RWPE1 (cell line): ENCODE measurements at regions of chr11 and their contacts with region 1.

Region 1: DNA sequence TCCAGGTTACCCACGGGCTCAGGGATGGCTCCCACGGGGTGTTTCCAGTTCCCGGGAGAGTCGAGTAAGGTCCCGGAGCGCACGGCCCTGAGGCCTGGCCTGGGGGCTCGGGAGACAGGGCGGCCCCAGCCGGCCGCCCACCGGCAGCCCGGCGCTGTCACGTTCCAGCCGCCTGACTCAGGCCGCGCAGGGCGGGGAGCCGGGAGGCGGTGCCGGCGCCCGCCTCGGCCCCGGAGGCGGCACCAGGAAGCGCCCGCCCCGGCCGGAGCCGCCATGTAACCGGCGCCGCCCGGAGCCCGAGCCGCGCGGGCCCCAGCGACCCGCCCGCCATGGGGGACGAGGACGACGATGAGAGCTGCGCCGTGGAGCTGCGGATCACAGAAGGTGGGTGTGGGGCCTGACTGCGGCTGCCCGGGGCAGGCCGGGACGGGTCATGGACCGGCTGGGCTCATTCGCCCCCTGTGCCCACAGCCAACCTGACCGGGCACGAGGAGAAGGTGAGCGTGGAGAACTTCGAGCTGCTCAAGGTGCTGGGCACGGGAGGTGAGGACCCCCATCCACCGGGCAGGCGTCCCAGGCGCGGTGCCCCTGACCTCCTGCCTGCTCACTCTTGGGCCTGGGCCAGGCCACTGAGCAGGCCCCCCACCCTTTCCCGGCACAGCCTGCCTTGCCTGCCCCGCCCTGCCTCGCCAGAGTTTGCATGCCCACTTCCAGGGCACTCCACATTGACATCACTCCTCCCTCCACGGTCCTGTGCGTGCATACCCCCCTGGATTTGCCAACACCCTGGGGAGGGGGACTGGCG is at the start of gene RPS6KA4:
- DNase-seq: peak; percentile 82
- H3K27ac ChIP-seq: peak within 1 kb of the TSS; percentile 98
- CTCF ChIP-seq: no peak

Region 2: GRCh38 chr11:64294774-64295173 is 64.3 kb before region 1 on chr11:
- CTCF ChIA-PET with region 1: no interaction called
- POLR2A ChIA-PET with region 1: no interaction called
- DNase-seq: no peak
- H3K27ac ChIP-seq: no peak overlapping the region
- CTCF ChIP-seq: no peak

Region 3: DNA sequence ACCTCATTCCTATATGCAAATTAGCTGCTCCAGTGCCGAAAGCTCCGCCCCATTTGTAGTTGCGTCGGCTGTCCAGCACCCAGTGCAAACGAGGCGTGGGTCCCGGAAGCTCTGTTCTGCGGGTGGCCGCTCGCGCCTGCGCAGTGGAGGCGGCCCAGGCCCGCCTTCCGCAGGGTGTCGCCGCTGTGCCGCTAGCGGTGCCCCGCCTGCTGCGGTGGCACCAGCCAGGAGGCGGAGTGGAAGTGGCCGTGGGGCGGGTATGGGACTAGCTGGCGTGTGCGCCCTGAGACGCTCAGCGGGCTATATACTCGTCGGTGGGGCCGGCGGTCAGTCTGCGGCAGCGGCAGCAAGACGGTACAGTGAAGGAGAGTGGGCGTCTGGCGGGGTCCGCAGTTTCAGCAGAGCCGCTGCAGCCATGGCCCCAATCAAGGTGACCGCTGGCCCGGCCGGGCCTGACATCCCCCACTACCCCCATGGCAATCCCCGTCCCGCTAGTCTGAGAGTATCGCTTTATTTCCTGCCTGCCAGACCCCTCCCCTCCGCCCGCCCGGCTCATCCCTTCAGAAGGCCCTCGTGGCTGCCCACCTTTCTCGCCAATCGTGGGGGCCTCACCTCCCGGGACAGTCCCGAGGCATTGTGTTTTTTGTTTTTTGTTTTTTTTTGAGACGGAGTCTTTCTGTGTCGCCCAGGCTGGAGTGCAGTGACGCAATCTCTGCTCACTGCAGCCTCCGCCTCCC is 41.0 kb before region 1 on chr11 and contains the start of gene PRDX5:
- CTCF ChIA-PET with region 1: interaction called, 13 read pairs
- POLR2A ChIA-PET with region 1: interaction called, 19 read pairs
- DNase-seq: peak; percentile 90
- H3K27ac ChIP-seq: peak within 1 kb of the TSS; percentile 100
- CTCF ChIP-seq: peak; percentile 58

Region 4: DNA sequence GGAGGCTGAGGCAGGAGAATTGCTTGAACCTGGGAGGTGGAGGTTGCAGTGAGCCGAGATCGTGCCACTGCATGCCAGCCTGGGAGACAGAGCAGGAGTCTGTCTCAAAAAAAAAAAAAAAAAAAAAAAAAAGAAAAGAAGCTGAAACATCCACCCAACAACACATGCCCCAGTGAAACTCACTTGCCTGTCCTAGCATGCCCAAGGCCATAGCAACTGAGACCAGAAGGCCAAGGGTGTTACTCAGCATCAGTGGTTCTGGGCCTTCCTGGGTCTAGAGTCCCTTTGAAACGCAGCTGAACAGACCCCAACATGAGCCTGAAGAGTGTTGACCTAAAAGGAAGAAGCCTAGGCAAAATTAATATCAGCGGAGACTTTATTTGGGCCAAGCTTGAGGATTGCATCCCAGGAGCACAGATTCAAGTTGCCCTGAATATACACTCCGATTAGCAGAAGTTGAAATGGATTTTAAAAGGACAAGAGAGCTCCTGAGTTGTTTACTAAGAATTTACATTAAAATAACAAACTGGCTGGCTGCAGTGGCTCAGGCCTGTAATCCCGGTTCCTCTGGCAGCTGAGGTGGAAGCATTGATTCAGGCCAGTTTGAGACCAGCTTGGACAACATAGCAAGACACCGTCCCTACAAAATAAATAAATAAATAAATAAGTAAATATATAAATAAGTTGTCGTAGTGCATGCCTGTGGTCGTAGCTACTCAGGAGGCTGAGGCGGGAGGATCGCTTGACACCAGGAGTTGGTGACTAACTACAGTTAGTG is 34.2 kb before region 1 on chr11:
- CTCF ChIA-PET with region 1: interaction called, 10 read pairs
- POLR2A ChIA-PET with region 1: no interaction called
- DNase-seq: peak; percentile 76
- H3K27ac ChIP-seq: peak overlapping the region; percentile 100
- CTCF ChIP-seq: no peak

Region 5: GRCh38 chr11:64331557-64332371 is 27.3 kb before region 1 on chr11:
- CTCF ChIA-PET with region 1: interaction called, 34 read pairs
- POLR2A ChIA-PET with region 1: no interaction called
- DNase-seq: peak; percentile 85
- H3K27ac ChIP-seq: peak overlapping the region; percentile 98
- CTCF ChIP-seq: peak; percentile 75

Region 6: GRCh38 chr11:64341851-64342791 is 17.0 kb before region 1 on chr11:
- CTCF ChIA-PET with region 1: interaction called, 30 read pairs
- POLR2A ChIA-PET with region 1: no interaction called
- DNase-seq: peak; percentile 88
- H3K27ac ChIP-seq: peak overlapping the region; percentile 92
- CTCF ChIP-seq: peak; percentile 82

Region 7: GRCh38 chr11:64396079-64396591 is 37.0 kb after region 1 on chr11:
- CTCF ChIA-PET with region 1: no interaction called
- POLR2A ChIA-PET with region 1: no interaction called
- DNase-seq: no peak
- H3K27ac ChIP-seq: no peak overlapping the region
- CTCF ChIP-seq: no peak

Region 8: GRCh38 chr11:64474680-64475079 is 115.6 kb after region 1 on chr11:
- CTCF ChIA-PET with region 1: no interaction called
- POLR2A ChIA-PET with region 1: no interaction called
- DNase-seq: no peak
- H3K27ac ChIP-seq: no peak overlapping the region
- CTCF ChIP-seq: no peak

Region 9: GRCh38 chr11:64485074-64485473 is 126.0 kb after region 1 on chr11:
- CTCF ChIA-PET with region 1: no interaction called
- POLR2A ChIA-PET with region 1: no interaction called
- DNase-seq: no peak
- H3K27ac ChIP-seq: no peak overlapping the region
- CTCF ChIP-seq: no peak